ENCODE measurements at regions of chr19 and their contacts with region 1.

Region 1: GRCh38 chr19:17747205-17748098 is 3.8 kb upstream of the FCHO1 start:
- DNase-seq: peak; percentile 89
- ATAC-seq: peak; percentile 100
- H3K4me3 ChIP-seq: peak overlapping the region; percentile 40
- H3K27ac ChIP-seq: no peak overlapping the region
- H3K4me1 ChIP-seq: no peaks in the 10 kb centered on the region
- H3K27me3 ChIP-seq: peaks cover 7% of the 10 kb centered on the region; the same call in 1 of the 2 replicates
- CTCF ChIP-seq: no peak
- POLR2A ChIP-seq: no peak
- RAD21 ChIP-seq: no peak

Region 2: GRCh38 chr19:17734146-17734545 is 13.3 kb before region 1 on chr19:
- CTCF ChIA-PET with region 1: no interaction called
- POLR2A ChIA-PET with region 1: interaction called, 13 read pairs
- dilution Hi-C with region 1: no loop called
- in situ Hi-C with region 1: no loop called
- intact Hi-C with region 1: no loop called
- DNase-seq: no peak
- ATAC-seq: no peak
- H3K4me3 ChIP-seq: no peak overlapping the region
- H3K27ac ChIP-seq: no peak overlapping the region
- H3K4me1 ChIP-seq: peaks cover 3% of the 10 kb centered on the region
- H3K27me3 ChIP-seq: no peaks in the 10 kb centered on the region
- CTCF ChIP-seq: no peak
- POLR2A ChIP-seq: no peak
- RAD21 ChIP-seq: no peak

Measured in IMR-90 (cell line).